Endothelial cell of umbilical vein (primary cell): ENCODE measurements at regions of chr19 and their contacts with region 1.

Region 1: DNA sequence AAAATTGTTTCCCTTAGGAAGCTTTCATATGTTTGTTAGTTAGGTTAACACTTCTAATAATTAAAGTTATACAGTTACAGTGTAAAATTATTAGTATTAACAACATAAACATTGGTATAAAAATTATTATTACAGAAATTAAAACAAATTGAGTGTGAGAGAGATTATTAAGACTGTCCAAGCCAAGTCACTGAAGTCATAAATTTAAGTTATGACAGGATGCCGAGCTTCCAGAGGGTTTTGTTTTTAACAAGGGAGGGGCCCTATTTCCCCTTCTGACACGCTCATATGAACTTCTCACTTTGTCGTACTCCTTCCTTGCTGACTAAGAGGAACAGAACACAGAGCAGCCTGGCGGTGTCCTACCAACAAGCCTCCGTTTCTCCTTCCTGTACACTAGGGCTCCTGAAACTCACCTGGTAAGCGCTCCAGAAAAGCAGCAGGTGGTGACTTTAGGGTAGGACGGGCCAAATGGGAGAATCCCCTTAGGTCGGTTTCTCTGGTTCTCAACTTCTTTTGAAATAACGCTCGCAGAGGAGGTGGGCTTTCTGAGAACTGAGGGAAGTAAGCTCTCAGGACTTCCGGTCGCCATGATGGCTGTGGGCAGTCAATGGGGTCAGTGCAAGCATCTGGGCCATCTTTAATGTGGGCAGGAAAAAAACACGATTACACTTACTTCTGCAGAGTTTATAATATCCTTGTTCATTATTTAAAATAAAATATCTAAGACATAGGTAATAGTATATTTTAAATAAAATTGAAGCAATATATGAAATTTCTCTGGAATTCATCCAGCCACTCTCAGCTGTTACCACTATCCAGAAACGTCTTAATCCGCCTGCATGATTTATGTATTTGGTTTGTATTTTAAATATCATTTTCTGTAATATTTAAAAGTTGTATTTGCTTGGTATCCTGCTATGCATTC is at the start of gene CARD8:
- DNase-seq: peak; percentile 94
- H3K4me3 ChIP-seq: peak within 1 kb of the TSS; percentile 32 to 81 (median 72)
- H3K27ac ChIP-seq: peak within 1 kb of the TSS; percentile 92
- H3K4me1 ChIP-seq: peaks cover 60% of the 10 kb centered on the region
- H3K27me3 ChIP-seq: no peaks in the 10 kb centered on the region
- CTCF ChIP-seq: no peak
- POLR2A ChIP-seq: peak; percentile 93
- total RNA-seq, gene CARD8: 123 and 156 TPM in 2 replicates

Region 2: GRCh38 chr19:48152551-48152950 is 103.1 kb before region 1 on chr19:
- CTCF ChIA-PET with region 1: interaction called, 14 read pairs
- POLR2A ChIA-PET with region 1: no interaction called
- dilution Hi-C with region 1: no loop called
- intact Hi-C with region 1: loop called (anchors 1 kb)
- DNase-seq: peak; percentile 98
- H3K4me3 ChIP-seq: no peak overlapping the region
- H3K27ac ChIP-seq: peak overlapping the region; percentile 94
- H3K4me1 ChIP-seq: peaks cover 15% of the 10 kb centered on the region
- H3K27me3 ChIP-seq: no peaks in the 10 kb centered on the region
- CTCF ChIP-seq: peak; percentile 65 to 67
- POLR2A ChIP-seq: peak; percentile 32

Region 3: GRCh38 chr19:48182434-48182833 is 73.2 kb before region 1 on chr19:
- CTCF ChIA-PET with region 1: no interaction called
- POLR2A ChIA-PET with region 1: no interaction called
- dilution Hi-C with region 1: no loop called
- intact Hi-C with region 1: no loop called
- DNase-seq: no peak
- H3K4me3 ChIP-seq: no peak overlapping the region
- H3K27ac ChIP-seq: no peak overlapping the region
- H3K4me1 ChIP-seq: no peaks in the 10 kb centered on the region
- H3K27me3 ChIP-seq: no peaks in the 10 kb centered on the region
- CTCF ChIP-seq: no peak
- POLR2A ChIP-seq: no peak

Region 4: DNA sequence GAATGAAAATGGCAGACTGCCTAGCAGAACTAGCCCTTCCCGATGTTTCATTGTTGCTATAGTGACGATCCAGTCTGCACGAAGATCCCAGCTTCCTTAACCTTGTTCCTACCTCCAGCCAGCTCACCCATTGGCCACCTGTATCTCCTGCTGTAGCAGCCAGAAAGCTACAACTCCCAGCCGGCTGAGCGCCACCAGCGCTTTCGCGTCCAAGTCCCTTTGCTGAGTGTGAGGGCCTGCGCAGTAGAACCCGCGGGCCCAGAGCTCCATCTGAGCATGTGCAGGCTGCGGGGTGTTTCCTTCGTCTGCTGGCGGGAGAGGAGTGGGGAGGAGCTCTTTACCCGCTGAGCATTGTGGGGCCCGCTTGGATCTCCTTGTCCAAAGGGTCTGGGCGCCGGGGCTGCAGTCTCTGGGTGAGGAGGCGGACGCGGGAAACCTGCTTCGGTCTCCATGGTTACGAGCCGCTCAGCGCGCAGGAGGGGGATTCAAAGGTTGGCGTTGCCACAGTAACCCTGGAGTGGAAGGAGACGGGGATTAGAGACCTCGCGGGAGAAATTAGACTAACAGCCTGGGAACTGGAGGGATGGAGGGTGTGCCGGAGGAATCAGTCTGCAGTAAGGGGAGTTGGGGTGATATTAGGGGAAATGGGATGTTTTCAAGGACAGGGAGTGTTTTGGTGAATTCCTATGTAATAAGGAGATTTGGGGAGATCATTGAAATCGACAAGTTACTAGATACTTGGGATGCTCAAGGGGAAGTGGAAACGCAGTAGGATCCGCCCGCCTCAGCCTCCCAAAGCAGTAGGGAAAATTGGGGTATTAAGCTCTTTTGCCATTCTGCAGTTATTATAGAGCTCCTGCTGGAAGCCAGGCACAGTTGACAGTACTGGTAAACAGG is 51.7 kb before region 1 on chr19:
- CTCF ChIA-PET with region 1: interaction called, 43 read pairs
- POLR2A ChIA-PET with region 1: interaction called, 9 read pairs
- dilution Hi-C with region 1: no loop called
- intact Hi-C with region 1: no loop called
- DNase-seq: peak; percentile 98
- H3K4me3 ChIP-seq: peak overlapping the region; percentile 35 to 90 (median 52)
- H3K27ac ChIP-seq: peak overlapping the region; percentile 64
- H3K4me1 ChIP-seq: peaks cover 21% of the 10 kb centered on the region
- H3K27me3 ChIP-seq: no peaks in the 10 kb centered on the region
- CTCF ChIP-seq: no peak
- POLR2A ChIP-seq: peak; percentile 38

Region 5: DNA sequence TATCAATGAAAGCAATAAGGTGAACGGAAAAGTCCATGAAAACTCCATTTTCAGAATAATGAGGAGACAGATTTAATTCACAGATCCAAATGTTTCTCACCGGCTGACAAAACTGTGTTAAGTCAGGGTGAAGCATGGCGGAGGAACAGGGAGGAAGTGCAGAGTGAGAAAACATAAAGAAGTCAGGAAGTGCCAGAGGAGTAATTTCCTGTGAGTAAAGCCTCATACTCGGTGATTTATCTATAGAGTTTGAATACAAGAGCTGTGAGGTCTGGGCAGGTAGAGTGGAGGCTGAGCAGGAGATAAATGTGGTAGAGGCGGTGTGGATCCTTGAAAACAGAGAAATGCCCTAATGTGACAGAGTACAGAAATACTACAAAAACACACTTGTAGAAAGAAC is 11.4 kb before region 1 on chr19:
- CTCF ChIA-PET with region 1: interaction called, 31 read pairs
- POLR2A ChIA-PET with region 1: interaction called, 4 read pairs
- dilution Hi-C with region 1: no loop called
- intact Hi-C with region 1: loop called (anchors 1 kb)
- DNase-seq: peak; percentile 82
- H3K4me3 ChIP-seq: peak overlapping the region in 1 of 3 experiments; percentile 52
- H3K27ac ChIP-seq: peak overlapping the region; percentile 86
- H3K4me1 ChIP-seq: peaks cover 50% of the 10 kb centered on the region
- H3K27me3 ChIP-seq: no peaks in the 10 kb centered on the region
- CTCF ChIP-seq: no peak
- POLR2A ChIP-seq: no peak

Region 6: DNA sequence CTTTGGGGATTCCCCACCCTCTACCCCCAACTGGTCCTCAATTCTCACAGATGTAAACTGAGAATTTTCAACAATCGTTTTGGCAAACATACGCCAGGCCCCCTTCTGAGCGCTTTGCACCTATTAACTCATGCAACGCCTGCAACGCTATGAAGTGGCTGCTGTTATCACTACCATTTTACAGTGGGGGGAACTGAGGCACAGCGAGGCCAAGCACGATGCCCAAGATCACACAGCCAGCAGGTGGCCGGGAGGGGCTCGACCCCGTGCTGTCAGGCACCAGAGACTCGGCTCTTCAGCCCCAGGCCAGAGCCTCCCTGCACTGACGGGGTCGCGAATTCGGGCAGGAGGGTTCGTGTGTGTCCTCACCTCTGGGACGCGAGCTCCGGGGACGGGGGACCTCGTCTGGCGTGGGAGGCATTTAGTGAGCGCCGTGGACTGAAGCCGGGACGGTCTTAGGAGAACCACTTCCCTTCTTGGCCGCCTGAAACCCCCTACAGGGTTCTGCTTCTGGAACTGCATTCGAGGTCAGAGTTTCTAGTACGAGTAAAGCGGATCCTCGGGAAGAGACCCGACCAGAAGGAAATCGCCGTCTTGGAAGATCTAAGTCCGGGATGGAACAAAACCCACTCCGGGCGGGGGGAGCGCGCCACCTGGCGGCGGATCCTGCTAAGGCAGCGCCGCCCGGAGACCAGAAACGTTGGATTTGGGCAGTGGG is 35.3 kb after region 1 on chr19:
- CTCF ChIA-PET with region 1: interaction called, 11 read pairs
- POLR2A ChIA-PET with region 1: no interaction called
- dilution Hi-C with region 1: no loop called
- intact Hi-C with region 1: no loop called
- DNase-seq: peak; percentile 78
- H3K4me3 ChIP-seq: peak overlapping the region; percentile 4 to 58 (median 42)
- H3K27ac ChIP-seq: no peak overlapping the region
- H3K4me1 ChIP-seq: peaks cover 9% of the 10 kb centered on the region
- H3K27me3 ChIP-seq: no peaks in the 10 kb centered on the region
- CTCF ChIP-seq: peak; percentile 97 to 98
- POLR2A ChIP-seq: no peak